WTC11 (cell line): ENCODE measurements at regions of chr15 and their contacts with region 1.

Region 1: GRCh38 chr15:91706322-91707032 is 147.0 kb upstream of the SLCO3A1 start:
- DNase-seq: peak; percentile 84
- ATAC-seq: peak; percentile 96
- H3K4me3 Mint-ChIP-seq: no peak overlapping the region
- H3K27ac Mint-ChIP-seq: no peak overlapping the region
- H3K4me1 Mint-ChIP-seq: peaks cover 19% of the 10 kb centered on the region
- H3K27me3 Mint-ChIP-seq: peaks cover 3% of the 10 kb centered on the region; the same call in 1 of the 2 replicates
- CTCF ChIP-seq: peak; percentile 86

Region 2: DNA sequence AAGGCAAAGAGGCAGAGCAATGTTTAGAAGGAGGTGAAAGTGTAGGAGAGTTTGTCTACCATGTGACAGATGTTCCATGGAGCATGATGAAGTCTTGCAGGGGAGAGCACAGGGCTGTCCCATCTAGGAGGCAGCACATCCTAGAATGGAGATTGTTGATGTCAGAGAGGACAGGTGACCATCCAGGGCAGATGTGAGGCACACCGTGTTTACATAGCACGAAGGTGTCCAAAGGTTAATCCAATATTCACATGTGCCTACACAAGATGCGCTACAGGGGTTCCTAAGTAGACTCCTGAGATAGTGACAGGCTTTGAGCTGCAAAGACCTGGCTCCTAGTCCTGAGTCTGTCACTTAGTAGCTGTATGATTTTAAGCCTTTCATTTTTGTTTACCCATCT is 72.3 kb before region 1 on chr15:
- CTCF ChIA-PET with region 1: no interaction called
- POLR2A ChIA-PET with region 1: no interaction called
- DNase-seq: no peak
- ATAC-seq: no peak
- H3K4me3 Mint-ChIP-seq: no peak overlapping the region
- H3K27ac Mint-ChIP-seq: no peak overlapping the region
- H3K4me1 Mint-ChIP-seq: peaks cover 9% of the 10 kb centered on the region
- H3K27me3 Mint-ChIP-seq: no peaks in the 10 kb centered on the region
- CTCF ChIP-seq: no peak

Region 3: GRCh38 chr15:91670108-91670507 is 36.4 kb before region 1 on chr15:
- CTCF ChIA-PET with region 1: interaction called, 12 read pairs
- POLR2A ChIA-PET with region 1: no interaction called
- DNase-seq: no peak
- ATAC-seq: no peak
- H3K4me3 Mint-ChIP-seq: no peak overlapping the region
- H3K27ac Mint-ChIP-seq: no peak overlapping the region
- H3K4me1 Mint-ChIP-seq: no peaks in the 10 kb centered on the region
- H3K27me3 Mint-ChIP-seq: no peaks in the 10 kb centered on the region; the same call in none of the 2 replicates
- CTCF ChIP-seq: no peak

Region 4: DNA sequence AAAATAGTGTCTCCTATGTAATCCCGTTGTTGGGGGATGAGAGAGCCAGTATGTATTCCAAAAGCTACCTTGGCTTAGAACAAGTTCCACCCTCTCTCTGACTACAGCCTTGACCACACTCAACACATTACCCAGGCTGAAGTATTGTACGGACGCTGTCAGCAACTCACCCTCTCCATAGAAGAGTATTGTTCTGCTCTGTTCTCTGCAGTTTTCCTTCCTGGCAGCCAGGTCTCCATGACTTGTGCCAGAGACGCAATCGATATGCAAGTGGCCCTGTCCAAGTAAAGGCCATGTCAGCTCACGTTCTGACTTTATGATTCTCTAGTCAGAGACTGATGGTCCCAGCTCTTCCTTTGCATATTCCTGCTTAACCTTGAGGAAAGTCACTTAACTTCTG is 17.1 kb before region 1 on chr15:
- CTCF ChIA-PET with region 1: interaction called, 17 read pairs
- POLR2A ChIA-PET with region 1: no interaction called
- DNase-seq: no peak
- ATAC-seq: no peak
- H3K4me3 Mint-ChIP-seq: no peak overlapping the region
- H3K27ac Mint-ChIP-seq: no peak overlapping the region
- H3K4me1 Mint-ChIP-seq: peaks cover 3% of the 10 kb centered on the region; the same call in 1 of the 2 replicates
- H3K27me3 Mint-ChIP-seq: no peaks in the 10 kb centered on the region
- CTCF ChIP-seq: no peak

Region 5: GRCh38 chr15:91717811-91718210 is 11.3 kb after region 1 on chr15:
- CTCF ChIA-PET with region 1: interaction called, 22 read pairs
- POLR2A ChIA-PET with region 1: no interaction called
- DNase-seq: no peak
- ATAC-seq: no peak
- H3K4me3 Mint-ChIP-seq: no peak overlapping the region
- H3K27ac Mint-ChIP-seq: no peak overlapping the region
- H3K4me1 Mint-ChIP-seq: no peaks in the 10 kb centered on the region
- H3K27me3 Mint-ChIP-seq: no peaks in the 10 kb centered on the region; the same call in 1 of the 2 replicates
- CTCF ChIP-seq: no peak

Region 6: GRCh38 chr15:91852741-91853510 is 146.4 kb after region 1 on chr15:
- CTCF ChIA-PET with region 1: interaction called, 52 read pairs
- POLR2A ChIA-PET with region 1: interaction called, 3 read pairs
- DNase-seq: peak; percentile 69
- ATAC-seq: peak; percentile 62
- H3K4me3 Mint-ChIP-seq: peak overlapping the region; percentile 71
- H3K27ac Mint-ChIP-seq: no peak overlapping the region
- H3K4me1 Mint-ChIP-seq: peaks cover 40% of the 10 kb centered on the region
- H3K27me3 Mint-ChIP-seq: peaks cover 24% of the 10 kb centered on the region
- CTCF ChIP-seq: peak; percentile 85

Region 7: DNA sequence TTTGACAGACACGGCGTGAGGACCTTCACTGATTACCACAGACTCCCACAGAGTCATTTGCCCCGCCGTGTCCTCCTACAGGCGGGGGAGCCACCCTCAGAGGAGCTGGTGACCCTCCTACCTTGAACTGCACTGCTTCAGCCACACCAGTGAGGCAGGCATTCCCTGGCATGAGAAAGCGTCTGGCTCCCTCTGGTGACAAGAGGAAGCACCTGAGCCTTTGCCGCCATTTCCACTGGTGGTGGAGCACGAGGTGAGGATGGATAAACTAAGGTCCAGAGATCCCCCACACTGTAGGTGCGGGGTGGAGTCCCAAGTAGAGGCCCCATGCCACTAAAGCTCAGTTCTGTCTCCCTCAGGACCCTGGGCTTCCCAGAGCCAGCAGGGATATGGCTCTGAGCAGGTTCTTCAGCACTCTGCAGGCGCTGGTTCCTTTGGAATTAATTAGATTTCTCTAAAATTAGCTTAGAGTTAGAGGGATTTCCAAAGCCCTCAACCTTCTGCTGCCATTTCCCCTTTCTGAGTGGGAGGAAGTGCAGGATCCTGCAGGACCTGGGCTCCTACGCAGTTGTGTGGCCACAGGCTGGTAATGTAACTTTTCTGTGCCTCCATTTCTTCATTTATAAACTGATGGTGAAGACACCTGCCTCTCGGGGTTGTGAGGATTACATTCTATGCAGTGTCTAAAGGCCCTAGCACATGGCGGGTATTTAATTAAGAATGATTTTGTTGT is 371.0 kb after region 1 on chr15:
- CTCF ChIA-PET with region 1: interaction called, 17 read pairs
- POLR2A ChIA-PET with region 1: no interaction called
- DNase-seq: peak; percentile 81
- ATAC-seq: peak; percentile 82
- H3K4me3 Mint-ChIP-seq: no peak overlapping the region
- H3K27ac Mint-ChIP-seq: no peak overlapping the region
- H3K4me1 Mint-ChIP-seq: peaks cover 13% of the 10 kb centered on the region
- H3K27me3 Mint-ChIP-seq: peaks cover 2% of the 10 kb centered on the region; the same call in 1 of the 2 replicates
- CTCF ChIP-seq: peak; percentile 43